ENCODE measurements at regions of chr16 and their contacts with region 1.

Region 1: DNA sequence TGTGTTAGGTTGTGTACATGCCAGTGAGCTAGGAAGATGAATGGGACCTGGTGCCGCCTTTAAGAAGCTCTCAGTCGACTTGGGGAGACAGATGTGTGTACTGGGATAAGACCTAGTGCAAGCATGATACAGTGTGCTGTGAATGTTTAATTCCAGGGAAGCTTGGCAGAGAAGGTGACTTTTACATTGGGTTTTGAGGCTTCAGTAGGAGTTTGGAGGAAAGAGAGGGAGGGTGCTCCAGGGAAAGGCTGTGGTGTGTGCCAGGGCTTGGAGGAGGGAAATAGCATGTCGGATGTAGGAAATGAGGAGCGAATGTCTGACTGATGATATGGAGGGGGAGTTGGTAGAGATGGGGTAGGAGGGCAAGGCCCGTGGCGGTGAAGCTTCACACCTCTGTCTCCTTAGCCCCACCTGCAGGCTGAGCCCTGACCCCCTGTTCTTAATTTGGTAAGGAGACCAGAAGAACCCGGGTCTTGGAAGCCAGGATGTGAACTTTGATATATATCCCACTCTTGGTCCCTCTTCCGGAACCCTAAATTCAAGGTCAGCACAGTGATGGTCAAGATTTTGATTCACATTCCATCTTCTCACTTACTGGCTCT is 76.6 kb downstream of the PLCG2 start:
- DNase-seq: no peak

Region 2: DNA sequence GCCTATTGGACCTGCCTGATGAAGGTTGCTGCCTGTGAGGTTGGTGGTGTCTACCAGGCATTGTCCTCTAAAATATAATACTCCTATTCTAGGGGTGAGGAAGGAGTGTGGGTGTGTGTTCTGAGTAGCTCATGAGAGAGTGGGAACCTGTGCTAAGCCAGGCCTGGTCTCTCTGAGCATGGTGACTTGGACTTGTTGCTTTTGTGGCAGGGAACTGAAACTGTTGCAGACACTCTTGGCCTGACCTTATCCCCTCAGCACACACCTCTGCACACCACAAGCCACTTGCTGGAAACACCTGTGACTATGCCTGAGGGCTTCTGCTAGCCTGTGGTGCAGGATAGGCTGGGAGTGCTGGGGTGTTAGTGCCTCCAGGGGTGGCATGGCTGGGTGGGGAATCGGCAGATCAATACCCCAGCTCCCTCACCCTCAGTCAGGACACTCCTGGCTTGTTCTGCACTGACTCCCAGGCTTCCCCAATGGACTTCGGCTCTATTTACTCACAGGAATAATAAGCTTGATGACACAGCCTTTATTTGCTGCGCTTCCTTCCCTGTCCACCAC is 46.6 kb before region 1 on chr16:
- in situ Hi-C with region 1: loop called (anchors 10 kb)
- DNase-seq: no peak

Region 3: GRCh38 chr16:81921085-81921814 is 65.6 kb after region 1 on chr16:
- in situ Hi-C with region 1: no loop called
- DNase-seq: peak; percentile 3

Region 4: DNA sequence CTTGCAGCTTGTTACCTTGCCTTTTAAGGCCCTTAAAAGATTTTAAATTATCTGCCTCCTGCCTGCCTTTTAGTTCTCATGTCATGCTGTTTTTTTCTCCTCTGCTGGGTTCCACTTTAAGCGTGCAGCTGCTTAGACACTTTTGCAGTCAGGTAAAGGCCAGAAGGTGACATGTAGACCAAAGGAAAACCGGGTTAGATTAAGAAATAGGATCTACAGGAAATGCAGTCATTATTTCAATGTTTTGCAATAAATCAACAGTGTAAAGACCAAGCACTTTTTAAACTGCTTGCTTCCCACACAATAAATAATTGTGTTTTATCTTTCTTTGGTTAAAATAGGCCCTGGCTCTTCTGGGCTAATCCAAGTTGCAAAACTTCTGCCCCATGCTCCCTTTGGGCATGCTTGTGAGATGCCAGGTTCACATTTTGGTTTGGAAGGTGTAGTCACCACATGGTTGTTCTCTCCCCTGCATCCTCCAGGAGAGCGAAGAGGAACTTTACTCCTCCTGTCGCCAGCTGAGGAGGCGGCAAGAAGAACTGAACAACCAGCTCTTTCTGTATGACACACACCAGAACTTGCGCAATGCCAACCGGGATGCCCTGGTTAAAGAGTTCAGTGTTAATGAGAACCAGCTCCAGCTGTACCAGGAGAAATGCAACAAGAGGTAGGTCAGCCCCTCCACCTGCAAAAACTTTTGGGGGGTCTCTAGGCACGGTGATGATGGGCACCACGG is 100.7 kb after region 1 on chr16:
- in situ Hi-C with region 1: no loop called
- DNase-seq: no peak